ENCODE measurements at regions of chr11 and their contacts with region 1.

Region 1: GRCh38 chr11:6377902-6378639 is 12.2 kb upstream of the SMPD1 start:
- DNase-seq: peak; percentile 14 to 67 (median 57)
- H3K4me3 ChIP-seq: peak overlapping the region in 3 of 7 experiments; percentile 12 to 48 (median 25)
- H3K27ac ChIP-seq: peak overlapping the region in 1 of 2 experiments; percentile 54
- H3K4me1 ChIP-seq: peaks cover 4 to 17% (median 12%) of the 10 kb centered on the region in 4 experiments
- H3K27me3 ChIP-seq: no peaks in the 10 kb centered on the region

Region 2: DNA sequence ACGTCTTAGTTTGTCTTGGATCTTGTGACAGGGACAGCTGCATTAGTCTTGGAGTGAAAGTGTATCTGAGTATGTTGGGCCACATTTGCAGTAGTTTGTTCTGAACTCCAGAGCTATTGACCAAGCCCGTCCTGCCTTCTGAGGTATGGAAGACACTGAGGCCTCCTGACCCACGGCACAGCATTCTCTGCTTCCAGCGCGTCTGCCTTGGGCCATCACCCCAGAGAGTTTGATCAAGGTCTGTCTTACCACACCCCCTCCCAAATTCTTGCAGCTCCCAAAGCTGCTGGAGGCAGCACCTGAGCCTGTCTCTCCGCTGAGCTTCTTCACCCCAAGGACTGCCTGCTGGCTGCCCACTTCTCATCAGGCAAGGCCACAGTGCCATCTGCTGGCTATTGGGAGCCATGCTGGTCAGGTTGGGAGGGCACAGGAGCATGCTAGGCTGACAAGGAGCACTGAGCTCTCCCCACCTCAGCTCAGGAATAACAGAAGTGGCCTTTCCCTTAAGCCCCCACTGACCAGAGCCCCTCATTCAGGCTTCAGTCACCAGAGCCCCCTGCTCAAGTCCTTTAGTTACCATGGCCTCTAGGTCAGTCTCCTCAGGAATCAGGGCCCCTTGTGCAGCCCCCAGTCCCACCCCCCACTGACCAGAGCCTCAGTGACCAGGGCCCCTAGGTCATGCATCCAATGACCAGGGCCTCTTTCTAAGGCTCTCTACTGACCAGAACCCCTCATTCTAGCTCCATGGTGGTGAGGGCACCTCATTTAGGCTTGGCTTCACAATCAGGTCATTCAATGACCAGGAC is 15.0 kb before region 1 on chr11:
- CTCF ChIA-PET with region 1: interaction called, 32 read pairs
- POLR2A ChIA-PET with region 1: no interaction called
- DNase-seq: peak; percentile 51 to 79 (median 74)
- H3K4me3 ChIP-seq: no peak overlapping the region
- H3K27ac ChIP-seq: no peak overlapping the region
- H3K4me1 ChIP-seq: no peaks in the 10 kb centered on the region
- H3K27me3 ChIP-seq: peaks cover 0 to 2% (median 0%) of the 10 kb centered on the region in 5 experiments

Region 3: DNA sequence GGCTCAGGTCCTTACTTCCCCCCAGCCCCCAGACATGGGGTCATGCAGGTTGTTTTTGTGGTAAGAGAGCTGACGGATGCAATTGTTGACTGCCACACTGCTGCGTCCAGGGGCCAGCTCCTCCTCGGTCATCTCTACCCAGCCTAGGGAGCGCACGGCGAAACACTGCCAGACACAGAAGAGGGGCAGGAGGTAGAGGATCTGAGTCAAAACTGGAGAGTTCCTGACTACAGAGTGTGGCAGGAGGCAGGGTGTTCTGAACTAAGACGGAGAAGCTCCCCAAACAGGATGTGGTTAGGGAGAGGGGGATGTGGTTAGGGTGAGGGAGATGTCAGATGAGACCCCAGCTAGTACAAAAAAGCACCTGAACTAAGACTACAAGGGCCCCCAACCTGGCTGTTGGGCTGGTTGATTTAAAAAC is 24.5 kb after region 1 on chr11:
- CTCF ChIA-PET with region 1: interaction called, 29 read pairs
- POLR2A ChIA-PET with region 1: no interaction called
- DNase-seq: peak in 2 of 3 donors; percentile 81 to 84
- H3K4me3 ChIP-seq: peak overlapping the region in 4 of 7 experiments; percentile 25 to 40 (median 34)
- H3K27ac ChIP-seq: peak overlapping the region in 1 of 2 experiments; percentile 10
- H3K4me1 ChIP-seq: peaks cover 0 to 29% (median 25%) of the 10 kb centered on the region in 4 experiments
- H3K27me3 ChIP-seq: no peaks in the 10 kb centered on the region

Region 4: DNA sequence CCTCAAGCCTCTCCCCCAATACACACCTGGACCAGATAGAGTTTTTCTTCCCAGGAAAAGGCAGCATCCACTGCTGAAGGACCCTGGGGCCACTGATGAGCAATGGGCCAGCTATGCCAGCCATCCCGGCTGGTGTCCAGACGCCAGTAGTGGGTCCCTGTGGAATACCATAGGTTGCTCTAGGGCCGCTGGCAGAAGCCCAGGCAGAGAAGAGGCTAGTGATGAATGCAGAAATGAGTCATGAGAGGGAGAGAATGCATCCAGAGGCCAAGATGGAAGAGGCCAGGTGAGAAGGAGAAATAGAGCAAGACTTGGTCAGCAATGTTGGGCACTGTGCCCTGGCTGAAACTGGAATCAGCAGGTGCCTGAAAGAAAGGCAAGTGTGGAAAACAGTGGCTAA is 53.8 kb after region 1 on chr11:
- CTCF ChIA-PET with region 1: interaction called, 464 read pairs
- POLR2A ChIA-PET with region 1: no interaction called
- DNase-seq: no peak
- H3K4me3 ChIP-seq: no peak overlapping the region
- H3K27ac ChIP-seq: no peak overlapping the region
- H3K4me1 ChIP-seq: no peaks in the 10 kb centered on the region
- H3K27me3 ChIP-seq: peaks cover 0 to 4% (median 0%) of the 10 kb centered on the region in 5 experiments

Region 5: GRCh38 chr11:6505577-6506240 is 127.6 kb after region 1 on chr11:
- CTCF ChIA-PET with region 1: interaction called, 155 read pairs
- POLR2A ChIA-PET with region 1: no interaction called
- DNase-seq: peak; percentile 47 to 67 (median 65)
- H3K4me3 ChIP-seq: no peak overlapping the region
- H3K27ac ChIP-seq: no peak overlapping the region
- H3K4me1 ChIP-seq: no peaks in the 10 kb centered on the region
- H3K27me3 ChIP-seq: no peaks in the 10 kb centered on the region